Left ventricle myocardium superior (tissue), 1 donor: ENCODE measurements at regions of chr19 and their contacts with region 1.

Region 1: GRCh38 chr19:664913-665443 is 2.0 kb upstream of the RNF126 start:
- DNase-seq: peak; percentile 90
- ATAC-seq: peak; percentile 51

Region 2: DNA sequence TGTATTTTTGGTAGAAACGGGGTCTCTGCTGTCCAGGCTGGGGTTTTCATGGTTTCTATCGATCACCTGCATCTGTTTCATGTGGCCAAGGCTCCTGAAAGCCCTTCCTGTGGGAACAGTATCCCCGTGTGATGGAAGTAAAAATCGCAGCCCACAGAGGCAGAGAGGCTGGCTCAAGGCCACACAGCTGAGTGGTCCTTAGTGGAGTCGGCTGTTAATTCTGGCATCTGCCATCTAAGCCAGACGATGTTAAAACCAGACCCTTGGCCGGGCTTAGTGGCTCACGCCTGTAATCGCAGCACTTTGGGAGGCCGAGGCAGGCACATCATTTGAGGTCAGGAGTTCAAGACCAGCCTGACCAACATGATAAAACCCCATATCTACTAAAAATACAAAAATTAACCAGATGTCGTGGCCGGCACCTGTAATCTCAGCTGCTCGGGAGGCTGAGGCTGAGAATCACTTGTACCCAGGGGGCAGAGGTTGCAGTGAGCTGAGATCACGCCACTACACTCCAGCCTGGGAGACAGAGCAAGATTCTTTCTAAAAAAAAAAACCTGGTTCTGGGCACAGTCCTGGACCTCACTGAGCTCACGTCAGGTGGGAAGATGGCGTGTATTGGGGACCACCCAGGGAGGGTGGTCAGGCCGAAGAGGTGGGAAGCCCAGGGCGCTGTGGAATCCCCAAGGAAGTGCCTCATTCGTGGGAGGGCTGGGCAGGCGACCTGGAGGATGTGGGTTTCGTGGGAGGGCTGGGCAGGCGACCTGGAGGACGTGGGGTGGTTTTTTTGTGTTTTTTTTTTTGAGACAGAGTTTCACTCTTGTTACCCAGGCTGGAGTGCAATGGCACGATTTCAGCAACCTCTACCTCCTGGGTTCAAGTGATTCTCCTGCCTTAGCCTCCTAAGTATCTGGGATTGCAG is 67.4 kb after region 1 on chr19:
- intact Hi-C with region 1: loop called (anchors 5 kb)
- DNase-seq: no peak
- ATAC-seq: no peak